ENCODE measurements at regions of chr3 and their contacts with region 1.

Region 1: DNA sequence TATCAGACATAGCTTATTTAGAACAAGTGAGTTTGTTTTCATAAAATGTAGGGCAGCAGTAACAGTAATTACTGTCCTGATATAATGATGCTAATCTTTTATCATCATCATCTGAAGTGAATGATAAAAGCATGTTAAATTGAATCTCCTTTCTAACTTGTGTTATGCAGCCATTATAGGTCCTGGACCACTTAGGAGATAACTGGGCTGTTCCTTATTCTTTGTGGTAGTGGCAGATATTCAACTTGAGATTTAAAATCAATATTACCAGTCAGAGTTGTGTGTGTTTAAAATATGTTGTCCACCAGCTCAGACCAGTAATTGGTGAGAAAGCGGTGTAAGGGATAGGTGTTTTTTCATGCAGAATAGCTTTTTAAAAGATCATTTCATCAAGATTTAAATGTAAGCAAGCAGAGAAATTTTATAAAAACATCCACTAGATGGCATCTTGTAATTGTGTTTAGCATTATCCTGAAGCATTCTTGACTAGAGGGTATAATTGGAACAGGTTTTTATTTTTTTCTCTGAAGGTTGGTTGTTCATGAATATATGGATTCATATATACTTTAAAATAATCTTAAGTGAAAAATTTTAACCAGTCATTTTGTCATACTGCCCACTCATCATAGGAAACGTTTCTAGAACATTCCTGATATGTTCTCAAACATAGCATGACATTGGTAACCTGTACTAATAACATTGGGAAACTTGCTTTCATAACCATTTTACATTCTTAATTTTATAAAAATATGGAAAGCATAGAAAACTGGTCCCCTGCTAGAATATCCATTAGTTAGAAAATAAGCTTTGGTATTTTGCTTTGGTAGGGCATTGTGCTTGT is 153.9 kb downstream of the BBX start:
- DNase-seq: no peak
- ATAC-seq: peak; percentile 41; the same call in 1 of the 2 replicates
- H3K4me3 Mint-ChIP-seq: no peak overlapping the region
- H3K27ac Mint-ChIP-seq: no peak overlapping the region
- H3K4me1 Mint-ChIP-seq: peaks cover 13% of the 10 kb centered on the region
- H3K27me3 Mint-ChIP-seq: no peaks in the 10 kb centered on the region
- CTCF ChIP-seq: peak; percentile 15; the same call in 1 of the 2 replicates

Region 2: GRCh38 chr3:107450254-107450893 is 226.3 kb before region 1 on chr3:
- CTCF ChIA-PET with region 1: no interaction called
- POLR2A ChIA-PET with region 1: no interaction called
- DNase-seq: no peak
- ATAC-seq: no peak
- H3K4me3 Mint-ChIP-seq: no peak overlapping the region
- H3K27ac Mint-ChIP-seq: no peak overlapping the region
- H3K4me1 Mint-ChIP-seq: no peaks in the 10 kb centered on the region
- H3K27me3 Mint-ChIP-seq: no peaks in the 10 kb centered on the region
- CTCF ChIP-seq: no peak

Region 3: GRCh38 chr3:107578523-107578922 is 98.2 kb before region 1 on chr3:
- CTCF ChIA-PET with region 1: interaction called, 11 read pairs
- POLR2A ChIA-PET with region 1: no interaction called
- DNase-seq: no peak
- ATAC-seq: peak; percentile 92
- H3K4me3 Mint-ChIP-seq: no peak overlapping the region
- H3K27ac Mint-ChIP-seq: peak overlapping the region; percentile 80
- H3K4me1 Mint-ChIP-seq: peaks cover 39% of the 10 kb centered on the region
- H3K27me3 Mint-ChIP-seq: no peaks in the 10 kb centered on the region
- CTCF ChIP-seq: no peak

Region 4: DNA sequence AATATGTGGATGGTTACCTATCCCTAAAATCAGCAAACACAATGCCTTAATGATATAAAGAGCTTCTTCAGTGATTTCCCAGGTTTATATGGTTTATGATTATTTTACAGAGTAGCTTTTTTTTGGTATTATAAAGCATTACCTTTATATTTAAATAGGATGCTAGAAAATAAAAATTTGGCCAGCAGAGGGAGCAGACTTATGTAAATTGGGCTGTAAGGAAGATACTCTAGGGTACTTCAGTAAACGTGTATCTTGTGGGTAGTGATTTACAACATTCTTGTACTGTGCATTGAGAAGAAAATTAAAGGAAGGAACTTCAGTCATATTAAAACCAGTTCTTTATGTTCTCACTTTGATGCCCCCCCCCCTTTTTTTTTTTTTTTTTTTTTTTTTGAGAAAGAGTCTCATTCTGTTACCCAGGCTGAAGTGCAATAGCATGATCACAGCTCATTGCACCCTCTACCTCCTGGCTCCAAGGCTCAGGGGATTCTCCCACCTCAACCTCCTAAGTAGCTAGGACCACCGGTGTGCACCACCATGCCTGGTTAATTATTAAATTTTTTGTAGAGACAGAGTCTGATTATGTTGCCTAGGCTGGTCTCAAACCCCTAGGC is 13.9 kb after region 1 on chr3:
- CTCF ChIA-PET with region 1: interaction called, 19 read pairs
- POLR2A ChIA-PET with region 1: no interaction called
- DNase-seq: no peak
- ATAC-seq: peak; percentile 47; the same call in 1 of the 2 replicates
- H3K4me3 Mint-ChIP-seq: no peak overlapping the region
- H3K27ac Mint-ChIP-seq: no peak overlapping the region
- H3K4me1 Mint-ChIP-seq: peaks cover 14% of the 10 kb centered on the region
- H3K27me3 Mint-ChIP-seq: no peaks in the 10 kb centered on the region
- CTCF ChIP-seq: peak; percentile 30; the same call in 1 of the 2 replicates

Region 5: GRCh38 chr3:107699682-107700081 is 23.0 kb after region 1 on chr3:
- CTCF ChIA-PET with region 1: interaction called, 10 read pairs
- POLR2A ChIA-PET with region 1: no interaction called
- DNase-seq: no peak
- ATAC-seq: no peak
- H3K4me3 Mint-ChIP-seq: no peak overlapping the region
- H3K27ac Mint-ChIP-seq: no peak overlapping the region
- H3K4me1 Mint-ChIP-seq: peaks cover 46% of the 10 kb centered on the region
- H3K27me3 Mint-ChIP-seq: no peaks in the 10 kb centered on the region
- CTCF ChIP-seq: no peak

Region 6: GRCh38 chr3:107740992-107741896 is 64.6 kb after region 1 on chr3:
- CTCF ChIA-PET with region 1: interaction called, 66 read pairs
- POLR2A ChIA-PET with region 1: no interaction called
- DNase-seq: no peak
- ATAC-seq: no peak
- H3K4me3 Mint-ChIP-seq: no peak overlapping the region
- H3K27ac Mint-ChIP-seq: no peak overlapping the region
- H3K4me1 Mint-ChIP-seq: peaks cover 12% of the 10 kb centered on the region
- H3K27me3 Mint-ChIP-seq: no peaks in the 10 kb centered on the region
- CTCF ChIP-seq: peak; percentile 30; the same call in 1 of the 2 replicates

Region 7: GRCh38 chr3:107753480-107753879 is 76.8 kb after region 1 on chr3:
- CTCF ChIA-PET with region 1: interaction called, 14 read pairs
- POLR2A ChIA-PET with region 1: no interaction called
- DNase-seq: peak; percentile 44
- ATAC-seq: peak; percentile 92
- H3K4me3 Mint-ChIP-seq: no peak overlapping the region
- H3K27ac Mint-ChIP-seq: no peak overlapping the region
- H3K4me1 Mint-ChIP-seq: peaks cover 5% of the 10 kb centered on the region
- H3K27me3 Mint-ChIP-seq: no peaks in the 10 kb centered on the region
- CTCF ChIP-seq: no peak

Region 8: DNA sequence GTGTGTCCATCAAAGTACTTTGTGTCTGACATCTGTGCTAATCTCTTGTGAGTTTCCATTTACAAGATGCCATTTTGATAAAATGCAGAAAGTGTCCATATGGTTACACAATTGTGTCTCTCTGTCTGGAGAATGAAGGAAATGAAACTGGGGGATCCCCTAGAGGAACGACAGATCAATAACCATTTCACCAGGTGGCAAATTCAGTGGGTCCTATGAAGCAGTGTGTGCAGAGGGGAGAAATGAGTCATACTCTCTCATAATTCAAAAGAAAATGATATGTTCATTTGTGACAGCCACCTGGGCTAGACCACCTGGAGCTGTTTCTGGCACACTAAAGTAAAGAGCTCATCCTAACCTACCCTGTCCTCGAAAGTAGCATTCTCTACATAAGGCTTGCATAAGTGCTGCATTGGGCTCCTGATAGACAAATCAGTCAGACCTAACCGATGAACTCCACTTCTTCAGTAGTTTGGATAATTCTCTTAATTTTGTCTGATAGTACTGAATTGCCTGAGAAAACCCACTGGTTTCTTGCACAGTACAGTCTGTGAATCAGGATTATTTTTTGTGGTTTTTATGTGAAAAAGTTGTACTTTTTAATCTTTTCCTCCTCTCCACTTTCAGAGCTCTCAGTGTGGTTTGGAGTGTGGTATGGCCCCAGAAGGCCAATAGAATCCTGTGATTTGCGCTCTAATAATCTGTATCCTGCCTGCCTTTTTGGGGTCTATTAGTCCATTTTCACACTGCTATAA is 424.4 kb after region 1 on chr3:
- CTCF ChIA-PET with region 1: no interaction called
- POLR2A ChIA-PET with region 1: no interaction called
- DNase-seq: no peak
- ATAC-seq: no peak
- H3K4me3 Mint-ChIP-seq: no peak overlapping the region
- H3K27ac Mint-ChIP-seq: no peak overlapping the region
- H3K4me1 Mint-ChIP-seq: peaks cover 20% of the 10 kb centered on the region
- H3K27me3 Mint-ChIP-seq: no peaks in the 10 kb centered on the region
- CTCF ChIP-seq: no peak

Measured in WTC11 (cell line).